ENCODE measurements at regions of chr19 and their contacts with region 1.

Region 1: DNA sequence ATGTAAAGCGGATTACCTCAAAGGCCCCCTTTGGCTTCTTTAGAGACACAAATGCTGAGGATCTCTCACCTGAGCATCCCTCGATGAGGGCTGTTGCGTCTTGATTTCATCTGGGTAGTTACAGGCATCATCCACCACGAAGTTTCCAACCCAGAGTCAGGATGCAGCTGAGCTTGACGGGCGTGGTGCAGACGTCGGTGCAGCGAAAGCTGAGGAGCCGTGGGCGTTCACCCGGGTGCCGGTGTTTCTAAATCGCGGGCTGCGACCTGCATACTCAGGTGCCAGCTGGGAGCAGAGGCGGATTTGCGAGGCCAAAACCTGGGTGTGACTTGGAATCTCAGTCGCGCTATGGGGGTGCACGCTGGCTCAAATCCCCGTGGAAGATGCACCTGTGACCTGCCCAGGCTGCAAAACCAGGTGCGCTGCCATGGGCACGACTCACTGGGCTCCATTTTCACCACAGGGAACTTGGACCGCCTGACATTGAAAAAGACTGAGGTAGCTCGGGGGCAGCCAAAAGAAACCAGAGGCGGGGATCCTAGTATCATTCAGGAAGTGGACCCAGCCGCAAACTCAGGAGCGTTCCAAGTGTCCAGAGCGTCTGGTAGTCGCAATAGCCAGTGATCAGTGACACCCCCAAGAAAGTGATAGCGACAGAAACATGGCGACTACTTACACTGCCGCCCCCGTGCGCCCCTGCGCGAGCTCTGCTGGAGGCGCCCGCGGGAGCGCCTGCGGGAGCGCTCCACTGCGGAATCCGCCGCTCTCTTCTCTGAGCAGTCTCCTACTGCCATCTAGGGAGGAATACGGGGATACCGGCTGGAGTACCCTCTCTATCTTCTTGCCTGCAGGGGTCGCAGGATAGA is 36.4 kb upstream of the IGFL4 start:
- DNase-seq: peak; percentile 89
- H3K4me3 Mint-ChIP-seq: peak overlapping the region; percentile 69
- H3K27ac Mint-ChIP-seq: no peak overlapping the region
- H3K4me1 Mint-ChIP-seq: peaks cover 41% of the 10 kb centered on the region
- H3K27me3 Mint-ChIP-seq: peaks cover 15% of the 10 kb centered on the region
- CTCF ChIP-seq: peak; percentile 98

Region 2: DNA sequence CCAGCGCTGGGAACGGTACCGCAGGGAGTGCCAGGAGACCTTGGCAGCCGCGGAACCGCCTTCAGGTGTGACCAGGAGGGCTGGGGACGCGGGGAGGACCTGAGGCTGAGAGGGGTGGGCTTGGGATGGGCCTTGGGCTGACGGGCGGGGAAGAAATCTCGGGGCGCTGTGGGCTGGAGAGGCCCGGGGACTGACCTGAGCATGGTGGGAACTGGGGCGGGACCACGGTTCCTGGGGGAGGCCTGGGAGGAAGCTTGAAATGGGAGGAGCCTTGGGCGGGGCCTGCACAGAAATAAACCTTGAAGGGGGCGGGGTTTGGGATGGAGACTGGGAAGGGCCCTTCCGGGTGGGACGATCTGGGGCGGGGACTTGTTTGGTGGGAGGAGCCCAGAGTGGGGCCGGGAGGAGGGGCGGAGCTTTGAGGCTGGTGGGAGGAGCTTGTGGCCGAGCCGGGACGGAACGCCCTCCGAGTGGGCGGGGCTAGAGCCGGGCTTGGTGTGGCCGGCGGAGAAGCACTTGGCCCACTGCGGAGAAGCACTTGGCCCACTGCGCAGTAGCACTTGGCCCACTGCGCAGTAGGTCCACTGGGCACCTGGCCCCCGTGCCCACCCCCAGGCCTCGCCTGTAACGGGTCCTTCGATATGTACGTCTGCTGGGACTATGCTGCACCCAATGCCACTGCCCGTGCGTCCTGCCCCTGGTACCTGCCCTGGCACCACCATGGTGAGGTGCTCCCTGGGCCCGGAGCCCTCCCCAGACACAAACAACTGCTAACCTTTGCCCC is 406.3 kb before region 1 on chr19:
- CTCF ChIA-PET with region 1: no interaction called
- POLR2A ChIA-PET with region 1: no interaction called
- intact Hi-C with region 1: no loop called
- DNase-seq: peak; percentile 49
- H3K4me3 Mint-ChIP-seq: no peak overlapping the region
- H3K27ac Mint-ChIP-seq: no peak overlapping the region
- H3K4me1 Mint-ChIP-seq: peaks cover 28% of the 10 kb centered on the region
- H3K27me3 Mint-ChIP-seq: peaks cover 19% of the 10 kb centered on the region
- CTCF ChIP-seq: no peak

Region 3: GRCh38 chr19:46030812-46031550 is 46.2 kb before region 1 on chr19:
- CTCF ChIA-PET with region 1: interaction called, 216 read pairs
- POLR2A ChIA-PET with region 1: interaction called, 8 read pairs
- intact Hi-C with region 1: loop called (anchors 1 kb)
- DNase-seq: no peak
- H3K4me3 Mint-ChIP-seq: no peak overlapping the region
- H3K27ac Mint-ChIP-seq: no peak overlapping the region
- H3K4me1 Mint-ChIP-seq: peaks cover 6% of the 10 kb centered on the region
- H3K27me3 Mint-ChIP-seq: no peaks in the 10 kb centered on the region
- CTCF ChIP-seq: no peak

Region 4: GRCh38 chr19:46063201-46063600 is 14.0 kb before region 1 on chr19:
- CTCF ChIA-PET with region 1: interaction called, 11 read pairs
- POLR2A ChIA-PET with region 1: interaction called, 3 read pairs
- intact Hi-C with region 1: no loop called
- DNase-seq: no peak
- H3K4me3 Mint-ChIP-seq: no peak overlapping the region
- H3K27ac Mint-ChIP-seq: no peak overlapping the region
- H3K4me1 Mint-ChIP-seq: peaks cover 24% of the 10 kb centered on the region
- H3K27me3 Mint-ChIP-seq: no peaks in the 10 kb centered on the region
- CTCF ChIP-seq: no peak

Region 5: GRCh38 chr19:46181388-46181779 is 104.2 kb after region 1 on chr19:
- CTCF ChIA-PET with region 1: interaction called, 13 read pairs
- POLR2A ChIA-PET with region 1: interaction called, 8 read pairs
- intact Hi-C with region 1: loop called (anchors 2 kb)
- DNase-seq: peak; percentile 62
- H3K4me3 Mint-ChIP-seq: no peak overlapping the region
- H3K27ac Mint-ChIP-seq: peak overlapping the region; percentile 84
- H3K4me1 Mint-ChIP-seq: peaks cover 50% of the 10 kb centered on the region
- H3K27me3 Mint-ChIP-seq: no peaks in the 10 kb centered on the region
- CTCF ChIP-seq: no peak

Region 6: GRCh38 chr19:46192992-46193650 is 115.9 kb after region 1 on chr19:
- CTCF ChIA-PET with region 1: interaction called, 75 read pairs
- POLR2A ChIA-PET with region 1: interaction called, 28 read pairs
- intact Hi-C with region 1: loop called (anchors 1 kb)
- DNase-seq: peak; percentile 91
- H3K4me3 Mint-ChIP-seq: peak overlapping the region; percentile 30
- H3K27ac Mint-ChIP-seq: peak overlapping the region; percentile 75
- H3K4me1 Mint-ChIP-seq: peaks cover 35% of the 10 kb centered on the region
- H3K27me3 Mint-ChIP-seq: no peaks in the 10 kb centered on the region
- CTCF ChIP-seq: no peak

Region 7: GRCh38 chr19:46221981-46222610 is 144.9 kb after region 1 on chr19:
- CTCF ChIA-PET with region 1: no interaction called
- POLR2A ChIA-PET with region 1: interaction called, 5 read pairs
- intact Hi-C with region 1: loop called (anchors 1 kb)
- DNase-seq: peak; percentile 98
- H3K4me3 Mint-ChIP-seq: peak overlapping the region; percentile 47
- H3K27ac Mint-ChIP-seq: peak overlapping the region; percentile 51
- H3K4me1 Mint-ChIP-seq: peaks cover 33% of the 10 kb centered on the region
- H3K27me3 Mint-ChIP-seq: peaks cover 24% of the 10 kb centered on the region
- CTCF ChIP-seq: no peak

Region 8: DNA sequence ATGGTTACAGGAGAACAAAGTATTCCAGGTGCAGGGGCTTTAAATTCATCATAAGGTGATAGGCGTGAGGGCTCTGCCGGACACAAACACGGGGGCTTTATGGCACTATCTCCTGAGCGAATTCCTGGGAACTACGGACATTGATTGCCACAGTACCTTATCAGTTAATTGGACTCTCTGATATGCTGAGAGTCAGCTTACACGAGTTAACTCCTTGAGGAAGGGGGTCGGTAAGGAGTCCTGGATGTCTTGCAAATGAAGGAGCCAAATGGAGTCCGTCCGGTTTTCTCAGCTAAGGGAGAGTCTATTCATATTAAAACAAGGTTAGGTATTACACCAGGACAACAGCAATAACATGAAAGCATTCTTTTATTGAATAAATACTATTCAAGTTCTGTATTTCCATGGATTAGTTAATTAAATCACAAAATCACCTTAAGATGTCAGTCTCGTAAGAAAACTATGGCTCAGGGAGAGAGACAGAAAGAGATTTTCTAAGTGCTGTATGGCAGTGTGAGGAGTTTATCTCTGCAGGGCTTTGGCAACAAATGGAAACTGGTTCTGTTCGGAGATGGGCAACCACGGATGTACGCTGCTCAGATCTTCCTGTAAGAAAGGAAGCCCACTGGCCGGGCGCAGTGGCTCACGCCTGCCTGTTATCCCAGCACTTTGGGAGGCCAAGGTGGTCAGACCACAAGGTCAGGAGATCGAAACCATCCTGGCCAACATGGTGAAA is 193.5 kb after region 1 on chr19:
- CTCF ChIA-PET with region 1: interaction called, 265 read pairs
- POLR2A ChIA-PET with region 1: interaction called, 7 read pairs
- intact Hi-C with region 1: loop called (anchors 1 kb)
- DNase-seq: no peak
- H3K4me3 Mint-ChIP-seq: no peak overlapping the region
- H3K27ac Mint-ChIP-seq: no peak overlapping the region
- H3K4me1 Mint-ChIP-seq: peaks cover 11% of the 10 kb centered on the region
- H3K27me3 Mint-ChIP-seq: no peaks in the 10 kb centered on the region
- CTCF ChIP-seq: no peak

Measured in MCF 10A (cell line).